Prostate gland (tissue), 2 donors: ENCODE measurements at regions of chr7 and their contacts with region 1.

Region 1: DNA sequence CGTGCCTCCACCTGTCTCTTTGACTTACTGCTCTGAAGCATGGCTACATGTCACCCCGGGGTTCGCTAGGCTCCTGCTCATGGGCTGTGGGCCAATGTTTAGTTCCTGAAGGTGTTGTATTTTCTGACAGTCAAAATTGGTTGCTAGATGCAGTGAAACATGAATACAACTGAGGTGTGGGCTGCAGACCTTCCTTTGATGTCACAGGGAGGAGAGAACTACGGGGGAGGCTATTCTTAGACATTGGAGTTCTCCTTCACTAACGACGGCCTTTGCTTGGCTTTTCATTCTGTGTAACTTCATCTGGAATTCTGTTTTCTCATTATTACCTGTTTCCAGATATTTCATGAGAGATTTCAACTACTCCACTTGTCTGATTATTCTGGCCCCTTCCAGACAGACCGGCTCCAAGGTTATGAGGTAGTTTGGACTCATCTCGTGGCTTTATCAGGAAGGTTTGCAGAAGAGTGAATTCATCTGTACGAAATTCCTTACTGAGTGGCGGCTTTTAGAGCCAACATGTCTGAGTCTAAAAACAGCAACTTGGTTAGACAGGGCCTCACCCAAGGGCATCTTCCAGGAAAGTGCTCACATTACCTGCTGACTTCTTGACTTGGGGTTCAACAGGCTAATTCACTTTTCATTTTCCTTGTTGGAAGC is 774.7 kb downstream of the SUGCT start:
- DNase-seq: no peak
- H3K4me3 ChIP-seq: no peak overlapping the region
- H3K27ac ChIP-seq: no peak overlapping the region
- H3K4me1 ChIP-seq: no peaks in the 10 kb centered on the region
- H3K27me3 ChIP-seq: no peaks in the 10 kb centered on the region
- CTCF ChIP-seq: no peak
- POLR2A ChIP-seq: no peak

Region 2: GRCh38 chr7:41696314-41696916 is 786.9 kb after region 1 on chr7:
- intact Hi-C with region 1: loop called (anchors 5 kb)
- DNase-seq: peak; percentile 74
- H3K4me3 ChIP-seq: no peak overlapping the region
- H3K27ac ChIP-seq: peak overlapping the region; percentile 21 to 28
- H3K4me1 ChIP-seq: no peaks in the 10 kb centered on the region
- H3K27me3 ChIP-seq: no peaks in the 10 kb centered on the region
- CTCF ChIP-seq: peak; percentile 62 to 82 (median 74)
- POLR2A ChIP-seq: no peak